Activated CD8-positive, alpha-beta memory T cell treated with anti-CD3 and anti-CD28 coated beads, Interleukin-2, amount 10 ng/mL, durations not matched to agents 7 days and 5 days (primary cell): ENCODE measurements at regions of chr6 and their contacts with region 1.

Region 1: DNA sequence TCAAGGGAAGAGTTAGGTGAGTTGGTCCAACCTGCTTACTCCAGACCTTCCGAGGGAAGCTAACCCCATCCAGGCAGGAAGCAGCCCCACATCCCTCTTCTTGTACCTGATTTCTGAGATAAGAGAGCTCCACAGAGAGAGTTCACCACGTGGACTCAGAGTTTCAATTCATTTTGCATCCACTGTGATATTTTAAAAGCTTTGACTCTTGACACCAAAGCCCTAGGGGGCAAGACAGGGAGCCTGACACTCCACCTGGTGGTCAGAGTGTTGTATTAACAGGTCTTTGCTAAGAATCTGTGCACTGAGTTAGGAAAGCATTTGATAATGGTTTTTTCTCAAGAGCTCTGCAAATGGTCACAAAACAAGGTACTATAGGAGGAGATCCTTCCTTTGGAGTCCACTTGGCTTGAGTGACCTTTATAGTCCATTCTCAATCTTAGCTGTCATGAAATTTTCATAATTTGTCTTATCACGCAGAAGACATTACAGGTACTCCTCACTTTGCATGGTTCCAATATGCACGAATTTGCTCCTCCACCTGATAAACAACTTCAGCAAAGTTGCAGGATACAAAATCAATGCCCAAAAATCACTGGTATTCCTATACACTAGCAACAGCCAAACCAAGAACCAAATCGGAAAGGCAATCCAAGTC is 56.2 kb upstream of the RIPOR2 start:
- DNase-seq: peak; percentile 87
- ATAC-seq: peak; percentile 97
- H3K4me3 Mint-ChIP-seq: no peak overlapping the region
- H3K27ac Mint-ChIP-seq: peak overlapping the region; percentile 67
- H3K4me1 Mint-ChIP-seq: peaks cover 27% of the 10 kb centered on the region
- H3K27me3 Mint-ChIP-seq: no peaks in the 10 kb centered on the region

Region 2: GRCh38 chr6:24699521-24700359 is 292.2 kb before region 1 on chr6:
- CTCF ChIA-PET with region 1: no interaction called
- DNase-seq: no peak
- ATAC-seq: no peak
- H3K4me3 Mint-ChIP-seq: no peak overlapping the region
- H3K27ac Mint-ChIP-seq: peak overlapping the region; percentile 57
- H3K4me1 Mint-ChIP-seq: peaks cover 11% of the 10 kb centered on the region
- H3K27me3 Mint-ChIP-seq: no peaks in the 10 kb centered on the region

Region 3: DNA sequence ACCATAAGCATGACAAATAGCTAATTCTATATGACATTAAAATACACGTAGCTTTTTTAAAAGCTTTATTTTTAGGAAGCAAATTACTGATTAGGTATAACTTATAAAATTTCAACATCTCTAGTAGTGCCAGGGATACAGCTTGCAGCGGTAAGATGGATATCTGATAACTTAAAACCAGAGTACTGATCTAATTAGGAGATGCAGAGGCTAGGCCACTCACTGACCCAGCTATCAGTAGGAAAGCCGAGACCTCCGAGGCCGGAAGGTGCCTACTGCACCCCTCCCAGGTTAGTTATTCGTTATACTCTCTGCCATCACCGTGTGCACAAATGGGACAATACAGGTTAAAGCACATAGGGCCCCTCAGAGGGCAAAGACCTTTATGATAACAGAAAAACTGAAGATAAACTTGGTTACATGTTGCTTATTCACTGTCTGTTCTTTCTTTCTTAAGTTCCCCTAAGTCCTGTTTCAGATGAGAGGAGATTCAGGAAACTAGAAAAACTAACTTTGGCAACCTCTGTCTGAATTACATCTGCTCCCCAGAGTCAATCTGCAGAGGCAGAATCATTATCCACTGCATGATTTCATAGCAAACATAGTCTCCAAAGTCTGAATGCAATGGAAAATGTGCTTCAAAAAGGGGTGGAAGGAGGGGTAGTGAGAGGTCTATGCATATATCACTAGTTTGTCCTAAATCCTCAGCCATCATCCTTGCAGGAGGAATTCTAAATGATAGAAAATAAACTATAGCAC is 117.0 kb before region 1 on chr6:
- CTCF ChIA-PET with region 1: interaction called, 14 read pairs
- DNase-seq: no peak
- ATAC-seq: no peak
- H3K4me3 Mint-ChIP-seq: no peak overlapping the region
- H3K27ac Mint-ChIP-seq: no peak overlapping the region
- H3K4me1 Mint-ChIP-seq: peaks cover 3% of the 10 kb centered on the region
- H3K27me3 Mint-ChIP-seq: no peaks in the 10 kb centered on the region

Region 4: GRCh38 chr6:24910961-24911712 is 80.8 kb before region 1 on chr6:
- CTCF ChIA-PET with region 1: interaction called, 32 read pairs
- DNase-seq: peak; percentile 60
- ATAC-seq: peak; percentile 59
- H3K4me3 Mint-ChIP-seq: peak overlapping the region; percentile 79
- H3K27ac Mint-ChIP-seq: peak overlapping the region; percentile 75
- H3K4me1 Mint-ChIP-seq: peaks cover 74% of the 10 kb centered on the region
- H3K27me3 Mint-ChIP-seq: no peaks in the 10 kb centered on the region

Region 5: DNA sequence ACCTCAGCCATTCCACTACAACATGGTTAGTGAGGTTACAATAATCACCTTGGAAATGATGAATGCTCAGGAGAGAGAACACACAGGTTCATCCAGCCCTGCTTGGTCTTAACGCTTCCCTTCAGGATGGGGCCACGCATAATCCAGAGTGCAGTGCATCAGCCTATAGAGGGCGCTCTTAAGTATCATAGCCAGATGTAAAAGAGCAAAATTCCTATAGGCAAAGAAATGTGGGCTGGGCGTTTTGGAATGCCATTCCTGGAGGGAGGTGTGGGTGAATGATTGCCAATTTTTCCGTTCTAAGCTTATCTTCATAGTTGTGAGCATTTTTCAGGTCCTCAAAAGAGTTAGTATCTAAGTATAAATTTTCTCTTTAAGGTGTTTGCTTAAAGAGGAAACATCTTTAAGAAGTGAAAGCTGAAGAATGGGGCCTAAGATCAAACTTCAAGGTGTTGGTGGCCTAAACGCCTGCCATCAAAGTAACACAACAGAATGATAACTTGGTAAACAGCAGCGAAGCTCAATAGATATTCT is 58.0 kb before region 1 on chr6:
- CTCF ChIA-PET with region 1: interaction called, 225 read pairs
- DNase-seq: peak; percentile 66
- ATAC-seq: peak; percentile 12
- H3K4me3 Mint-ChIP-seq: peak overlapping the region; percentile 95
- H3K27ac Mint-ChIP-seq: peak overlapping the region; percentile 97
- H3K4me1 Mint-ChIP-seq: peaks cover 87% of the 10 kb centered on the region
- H3K27me3 Mint-ChIP-seq: no peaks in the 10 kb centered on the region

Region 6: GRCh38 chr6:24980507-24981387 is 11.2 kb before region 1 on chr6:
- CTCF ChIA-PET with region 1: interaction called, 33 read pairs
- DNase-seq: no peak
- ATAC-seq: no peak
- H3K4me3 Mint-ChIP-seq: no peak overlapping the region
- H3K27ac Mint-ChIP-seq: no peak overlapping the region
- H3K4me1 Mint-ChIP-seq: peaks cover 7% of the 10 kb centered on the region
- H3K27me3 Mint-ChIP-seq: no peaks in the 10 kb centered on the region

Region 7: DNA sequence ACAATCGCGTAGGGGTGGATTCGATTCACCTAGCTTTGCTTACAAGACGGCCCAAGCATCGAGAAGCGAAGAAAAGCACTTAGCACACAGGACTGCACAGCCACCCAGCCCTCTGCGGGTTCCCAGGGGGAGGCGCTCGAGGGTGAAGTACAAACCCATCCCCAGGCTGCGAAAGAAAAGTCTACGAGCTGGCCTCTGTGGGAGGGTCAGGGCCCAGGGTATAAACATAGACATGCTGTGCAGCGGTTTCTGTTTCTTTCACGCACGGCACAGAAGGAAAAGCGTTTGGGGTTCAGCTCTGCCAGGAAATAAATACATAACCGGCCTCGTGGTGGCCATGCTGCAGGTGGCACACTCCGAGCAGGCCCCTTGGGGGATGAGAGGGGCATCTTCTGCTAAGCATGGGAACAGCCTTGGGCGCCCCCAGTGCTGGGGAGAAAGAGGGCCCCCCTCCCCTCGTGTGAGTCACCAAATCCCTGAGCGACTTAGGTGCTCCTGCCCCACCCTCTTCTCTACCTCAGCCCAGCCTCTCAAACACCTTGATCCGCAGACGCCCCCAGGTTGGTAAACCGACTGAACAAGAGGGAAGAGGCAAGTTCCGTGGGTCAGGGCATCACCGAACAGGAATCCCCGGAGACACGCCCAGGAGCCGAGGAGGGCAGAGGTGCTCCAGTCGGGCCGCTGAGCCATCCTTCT is 35.4 kb after region 1 on chr6:
- CTCF ChIA-PET with region 1: interaction called, 15 read pairs
- DNase-seq: peak; percentile 90
- ATAC-seq: peak; percentile 97
- H3K4me3 Mint-ChIP-seq: peak overlapping the region; percentile 56
- H3K27ac Mint-ChIP-seq: peak overlapping the region; percentile 73
- H3K4me1 Mint-ChIP-seq: peaks cover 37% of the 10 kb centered on the region
- H3K27me3 Mint-ChIP-seq: no peaks in the 10 kb centered on the region